ENCODE measurements at regions of chr2 and their contacts with region 1.

Region 1: GRCh38 chr2:44347526-44347925 is 13.8 kb downstream of the PREPL start:
- DNase-seq: no peak

Region 2: DNA sequence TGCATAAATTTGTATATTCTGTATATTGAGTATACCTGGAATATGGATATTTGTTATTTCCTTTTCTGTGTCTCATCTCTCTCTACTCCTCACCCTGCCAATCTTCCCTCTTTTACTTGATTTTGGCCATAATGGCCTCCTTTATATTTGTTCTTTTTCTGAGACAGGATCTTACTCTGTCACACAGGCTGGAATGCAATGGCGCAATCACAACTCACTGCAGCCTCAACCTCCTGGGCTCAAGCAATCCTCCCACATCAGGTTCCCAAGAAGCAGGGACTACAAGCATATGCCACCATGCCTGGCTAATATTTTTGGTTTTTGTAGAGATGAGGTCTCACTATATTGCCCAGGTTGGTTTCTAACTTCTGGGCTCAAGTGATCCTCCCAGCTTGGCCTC is 16.7 kb before region 1 on chr2:
- intact Hi-C with region 1: loop called in 1 of 2 experiments (anchors 1 kb)
- DNase-seq: no peak

Region 3: DNA sequence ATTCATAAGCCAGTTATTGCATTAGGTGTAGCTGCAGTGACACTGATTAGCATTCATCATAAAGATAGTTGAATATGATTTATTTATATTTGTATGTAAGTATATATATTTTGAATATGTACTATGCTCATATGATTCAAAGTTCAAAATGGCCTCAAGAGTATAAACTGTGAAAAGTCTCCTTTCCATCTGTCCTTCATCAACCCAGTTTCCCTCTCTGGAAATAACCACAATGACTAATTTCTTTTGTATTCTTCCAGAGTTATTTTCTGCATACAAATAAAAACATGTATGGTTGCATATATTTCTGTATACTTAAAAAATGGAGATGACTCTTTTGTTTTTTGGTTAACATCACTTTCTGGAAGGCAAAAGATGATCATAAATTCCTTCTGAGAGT is 109.4 kb after region 1 on chr2:
- intact Hi-C with region 1: no loop called
- DNase-seq: no peak

Measured in posterior vena cava (tissue), 2 donors.